Pancreas (tissue), 10 donors: ENCODE measurements at regions of chr18 and their contacts with region 1.

Region 1: DNA sequence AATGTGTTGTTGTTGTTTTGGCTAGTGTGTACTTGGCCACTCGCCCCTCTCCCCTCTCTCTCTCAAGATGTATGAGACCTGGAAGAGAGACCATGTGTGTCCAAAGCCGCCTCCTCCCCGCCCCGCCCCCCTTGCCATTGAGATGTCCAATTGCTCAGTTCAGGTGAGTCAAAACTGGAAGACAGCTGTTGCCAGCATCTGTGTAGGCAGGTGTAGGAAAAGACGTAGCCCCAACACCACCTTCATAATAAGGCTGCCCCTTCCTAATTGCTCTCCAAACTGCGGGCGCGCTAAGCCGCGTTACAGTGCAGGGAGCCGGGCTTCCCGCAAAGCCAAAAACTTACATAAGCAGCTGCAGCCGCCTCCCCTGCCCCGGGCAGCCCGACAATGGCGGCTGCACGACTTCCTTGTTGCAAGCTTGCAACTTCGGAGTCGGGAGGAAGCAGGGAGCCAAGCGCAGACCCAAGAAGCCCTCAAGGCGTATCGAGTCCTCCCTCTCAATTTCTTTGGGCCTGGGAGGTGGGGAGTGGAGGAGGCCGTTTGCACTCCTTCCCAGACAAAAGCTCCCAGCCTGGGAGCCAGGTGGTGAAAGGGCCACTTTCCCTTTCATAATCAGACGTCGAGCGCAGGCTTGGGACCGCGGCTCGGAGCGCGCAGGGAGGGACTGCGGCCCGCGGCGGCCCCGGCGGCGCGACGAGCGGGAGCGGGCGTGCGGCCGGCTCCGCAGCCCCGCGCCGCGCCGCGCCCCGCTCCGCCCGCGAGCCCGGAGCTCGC is 882 bp downstream of the ZBTB14 start:
- DNase-seq: peak; percentile 66 to 79 (median 74)
- ATAC-seq: peak in 3 of 4 donors; percentile 8 to 36 (median 13)
- H3K4me3 ChIP-seq: peak overlapping the region; percentile 63 to 90 (median 82)
- H3K27ac ChIP-seq: peak overlapping the region; percentile 94 to 99 (median 98)
- H3K4me1 ChIP-seq: peaks cover 0 to 14% (median 11%) of the 10 kb centered on the region in 3 donors
- H3K27me3 ChIP-seq: no peaks in the 10 kb centered on the region
- CTCF ChIP-seq: no peak

Region 2: GRCh38 chr18:4994710-4995109 is 299.9 kb before region 1 on chr18:
- intact Hi-C with region 1: no loop called
- DNase-seq: no peak
- ATAC-seq: no peak
- H3K4me3 ChIP-seq: no peak overlapping the region
- H3K27ac ChIP-seq: no peak overlapping the region
- H3K4me1 ChIP-seq: no peaks in the 10 kb centered on the region
- H3K27me3 ChIP-seq: no peaks in the 10 kb centered on the region
- CTCF ChIP-seq: no peak

Region 3: GRCh38 chr18:5244941-5245340 is 49.7 kb before region 1 on chr18:
- intact Hi-C with region 1: loop called in 1 of 3 experiments (anchors 5 kb)
- DNase-seq: no peak
- ATAC-seq: no peak
- H3K4me3 ChIP-seq: no peak overlapping the region
- H3K27ac ChIP-seq: no peak overlapping the region
- H3K4me1 ChIP-seq: peaks cover 0 to 9% (median 0%) of the 10 kb centered on the region in 3 donors
- H3K27me3 ChIP-seq: no peaks in the 10 kb centered on the region
- CTCF ChIP-seq: no peak

Region 4: DNA sequence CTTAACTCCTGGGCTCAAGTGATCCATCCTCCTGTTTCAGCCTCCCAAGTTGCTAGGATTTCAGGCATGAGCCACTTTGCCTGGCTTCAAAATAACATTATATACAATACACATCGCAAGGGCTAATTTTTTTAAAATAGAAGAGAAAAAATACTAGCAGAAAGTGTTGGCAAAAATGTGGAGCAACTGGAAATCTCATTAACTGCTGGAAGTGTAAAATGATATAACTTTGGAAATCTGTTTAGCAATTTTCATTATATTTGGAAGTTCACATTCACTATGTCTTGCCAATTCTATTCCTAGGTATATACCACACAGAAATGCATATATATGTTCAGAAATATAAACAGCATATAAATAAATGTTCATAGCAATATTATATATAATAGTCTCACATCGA is 56.0 kb after region 1 on chr18:
- intact Hi-C with region 1: no loop called
- DNase-seq: no peak
- ATAC-seq: no peak
- H3K4me3 ChIP-seq: no peak overlapping the region
- H3K27ac ChIP-seq: no peak overlapping the region
- H3K4me1 ChIP-seq: no peaks in the 10 kb centered on the region
- H3K27me3 ChIP-seq: no peaks in the 10 kb centered on the region
- CTCF ChIP-seq: no peak